HCT116 (cell line): ENCODE measurements at regions of chr3 and their contacts with region 1.

Region 1: GRCh38 chr3:79115454-79115853 is 652.3 kb downstream of the ROBO1 start:
- DNase-seq: no peak
- ATAC-seq: no peak
- H3K4me3 ChIP-seq: no peak overlapping the region
- H3K27ac ChIP-seq: no peak overlapping the region
- H3K4me1 ChIP-seq: no peaks in the 10 kb centered on the region
- H3K27me3 ChIP-seq: no peaks in the 10 kb centered on the region
- CTCF ChIP-seq: no peak
- POLR2A ChIP-seq: no peak
- RAD21 ChIP-seq: no peak

Region 2: GRCh38 chr3:78988324-78988723 is 127.1 kb before region 1 on chr3:
- CTCF ChIA-PET with region 1: no interaction called
- POLR2A ChIA-PET with region 1: no interaction called
- RAD21 ChIA-PET with region 1: no interaction called
- intact Hi-C with region 1: no loop called
- DNase-seq: no peak
- ATAC-seq: no peak
- H3K4me3 ChIP-seq: no peak overlapping the region
- H3K27ac ChIP-seq: no peak overlapping the region
- H3K4me1 ChIP-seq: no peaks in the 10 kb centered on the region
- H3K27me3 ChIP-seq: no peaks in the 10 kb centered on the region
- CTCF ChIP-seq: no peak
- POLR2A ChIP-seq: no peak
- RAD21 ChIP-seq: no peak

Region 3: DNA sequence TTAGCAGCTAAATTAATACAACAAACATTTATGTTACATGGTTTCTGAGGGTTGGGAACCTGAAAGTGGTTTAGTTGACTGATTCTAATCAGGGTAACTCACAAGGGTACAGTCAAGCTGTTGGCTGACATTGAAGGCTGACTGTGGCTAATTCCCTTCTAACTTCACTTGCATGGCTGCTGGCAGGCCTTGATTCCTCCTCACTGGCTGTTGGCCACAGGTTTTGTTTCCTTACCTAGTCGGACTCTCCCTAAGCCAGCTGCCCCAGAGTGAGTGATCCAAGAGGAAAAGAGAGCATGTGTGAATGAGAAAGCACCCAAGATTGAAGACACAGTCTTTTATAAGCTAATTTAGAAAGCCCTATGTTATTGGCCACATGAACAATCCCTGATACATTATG is 47.7 kb before region 1 on chr3:
- CTCF ChIA-PET with region 1: no interaction called
- POLR2A ChIA-PET with region 1: no interaction called
- RAD21 ChIA-PET with region 1: no interaction called
- intact Hi-C with region 1: loop called (anchors 5 kb)
- DNase-seq: no peak
- ATAC-seq: no peak
- H3K4me3 ChIP-seq: no peak overlapping the region
- H3K27ac ChIP-seq: no peak overlapping the region
- H3K4me1 ChIP-seq: no peaks in the 10 kb centered on the region
- H3K27me3 ChIP-seq: no peaks in the 10 kb centered on the region
- CTCF ChIP-seq: no peak
- POLR2A ChIP-seq: no peak
- RAD21 ChIP-seq: no peak

Region 4: DNA sequence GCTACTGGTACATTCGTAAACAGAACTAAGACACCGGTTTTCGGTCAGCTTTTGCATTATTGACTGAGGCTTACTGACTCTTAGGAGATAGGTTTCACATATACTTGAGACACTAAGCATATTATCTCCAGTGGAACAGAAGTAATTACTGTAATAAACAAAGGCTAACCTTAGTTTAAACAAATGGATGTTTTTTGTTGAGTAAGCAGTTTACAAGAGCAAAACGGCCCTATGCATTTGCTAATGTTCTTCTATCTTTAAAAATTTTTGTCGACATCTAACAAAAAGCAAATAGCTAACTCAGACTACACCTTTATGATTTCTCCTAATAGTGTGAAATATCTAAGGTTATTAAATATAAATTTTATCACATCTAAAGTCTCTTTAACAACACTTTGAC is 12.1 kb before region 1 on chr3:
- CTCF ChIA-PET with region 1: no interaction called
- POLR2A ChIA-PET with region 1: no interaction called
- RAD21 ChIA-PET with region 1: no interaction called
- intact Hi-C with region 1: no loop called
- DNase-seq: no peak
- ATAC-seq: no peak
- H3K4me3 ChIP-seq: no peak overlapping the region
- H3K27ac ChIP-seq: no peak overlapping the region
- H3K4me1 ChIP-seq: no peaks in the 10 kb centered on the region
- H3K27me3 ChIP-seq: no peaks in the 10 kb centered on the region
- CTCF ChIP-seq: no peak
- POLR2A ChIP-seq: no peak
- RAD21 ChIP-seq: no peak